B cell (primary cell): ENCODE measurements at regions of chr7 and their contacts with region 1.

Region 1: GRCh38 chr7:75914730-75915585 is at the start of gene POR:
- DNase-seq: peak; percentile 99
- ATAC-seq: peak; percentile 96
- H3K4me3 ChIP-seq: peak within 1 kb of the TSS; percentile 72 to 99 (median 91)
- H3K4me3 Mint-ChIP-seq: peak within 1 kb of the TSS; percentile 94
- H3K27ac ChIP-seq: peak within 1 kb of the TSS; percentile 89 to 95
- H3K27ac Mint-ChIP-seq: peak within 1 kb of the TSS; percentile 97
- H3K4me1 ChIP-seq: peaks cover 18 to 24% of the 10 kb centered on the region in 2 donors
- H3K4me1 Mint-ChIP-seq: peaks cover 31% of the 10 kb centered on the region
- H3K27me3 ChIP-seq: no peaks in the 10 kb centered on the region
- H3K27me3 Mint-ChIP-seq: no peaks in the 10 kb centered on the region
- CTCF ChIP-seq: no peak
- total RNA-seq, gene POR: 76.6 and 78.4 TPM in 2 replicates

Region 2: GRCh38 chr7:75878769-75879611 is 36.0 kb before region 1 on chr7 and contains the start of gene RHBDD2:
- CTCF ChIA-PET with region 1: no interaction called
- POLR2A ChIA-PET with region 1: interaction called, 10 read pairs
- intact Hi-C with region 1: loop called (anchors 1 kb)
- DNase-seq: peak; percentile 95
- ATAC-seq: peak; percentile 98
- H3K4me3 ChIP-seq: peak within 1 kb of the TSS; percentile 59 to 97 (median 81)
- H3K4me3 Mint-ChIP-seq: peak within 1 kb of the TSS; percentile 90
- H3K27ac ChIP-seq: peak within 1 kb of the TSS; percentile 66 to 87
- H3K27ac Mint-ChIP-seq: peak within 1 kb of the TSS; percentile 98
- H3K4me1 ChIP-seq: peaks cover 18 to 20% of the 10 kb centered on the region in 2 donors
- H3K4me1 Mint-ChIP-seq: peaks cover 26% of the 10 kb centered on the region
- H3K27me3 ChIP-seq: no peaks in the 10 kb centered on the region
- H3K27me3 Mint-ChIP-seq: no peaks in the 10 kb centered on the region
- CTCF ChIP-seq: peak; percentile 11
- total RNA-seq, gene RHBDD2: 31.6 and 34.1 TPM in 2 replicates

Region 3: DNA sequence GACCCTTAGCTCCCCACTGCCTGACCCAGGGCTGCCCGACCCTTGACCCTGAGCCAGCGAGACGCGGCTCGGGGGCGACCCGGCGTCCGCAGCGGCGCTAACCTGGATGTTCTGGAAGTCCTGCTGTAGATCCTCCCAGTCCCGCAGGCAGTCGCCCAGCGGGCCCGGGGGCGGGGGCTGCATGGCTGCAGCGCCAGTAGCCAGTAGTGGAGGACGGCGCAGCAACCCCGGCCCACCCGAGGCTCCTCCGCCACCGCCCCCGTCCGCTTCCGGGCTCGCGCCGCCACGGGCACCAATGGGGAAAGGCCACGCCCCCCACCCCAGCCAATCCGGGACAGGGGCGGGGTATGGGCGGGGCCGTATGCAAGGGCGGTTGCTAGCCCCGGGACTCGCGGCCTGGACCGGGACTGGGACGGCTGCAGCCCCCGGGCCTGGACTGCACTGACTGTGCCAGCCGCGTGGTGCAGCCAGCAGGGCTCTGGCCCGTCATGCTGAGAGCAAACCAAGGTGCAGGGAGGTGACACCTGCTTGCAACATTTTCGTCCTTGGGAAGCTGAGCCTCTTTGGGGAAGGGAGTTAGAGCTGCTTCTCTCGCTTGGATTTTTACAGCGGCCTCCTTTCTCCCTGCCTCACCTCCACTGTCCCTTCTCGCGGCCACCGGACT is 79.6 kb after region 1 on chr7 and contains the start of gene TMEM120A:
- CTCF ChIA-PET with region 1: no interaction called
- POLR2A ChIA-PET with region 1: interaction called, 5 read pairs
- intact Hi-C with region 1: loop called (anchors 2 kb)
- DNase-seq: peak; percentile 93
- ATAC-seq: peak; percentile 99
- H3K4me3 ChIP-seq: peak within 1 kb of the TSS; percentile 17 to 94 (median 90)
- H3K4me3 Mint-ChIP-seq: peak within 1 kb of the TSS; percentile 80
- H3K27ac ChIP-seq: peak within 1 kb of the TSS in 1 of 2 donors; percentile 70
- H3K27ac Mint-ChIP-seq: peak within 1 kb of the TSS; percentile 67
- H3K4me1 ChIP-seq: peaks cover 8 to 22% of the 10 kb centered on the region in 2 donors
- H3K4me1 Mint-ChIP-seq: peaks cover 36% of the 10 kb centered on the region
- H3K27me3 ChIP-seq: no peaks in the 10 kb centered on the region
- H3K27me3 Mint-ChIP-seq: no peaks in the 10 kb centered on the region
- CTCF ChIP-seq: no peak
- total RNA-seq, gene TMEM120A: 49.3 and 52.6 TPM in 2 replicates

Region 4: GRCh38 chr7:76047811-76048667 is 133.1 kb after region 1 on chr7 and contains the starts of genes MDH2 and STYXL1:
- CTCF ChIA-PET with region 1: no interaction called
- POLR2A ChIA-PET with region 1: interaction called, 5 read pairs
- intact Hi-C with region 1: loop called (anchors 2 kb)
- DNase-seq: peak; percentile 90
- ATAC-seq: peak; percentile 93
- H3K4me3 ChIP-seq: peak within 1 kb of the TSS; percentile 91 to 99 (median 99)
- H3K4me3 Mint-ChIP-seq: peak within 1 kb of the TSS; percentile 94
- H3K27ac ChIP-seq: peak within 1 kb of the TSS; percentile 77 to 91
- H3K27ac Mint-ChIP-seq: peak within 1 kb of the TSS; percentile 93
- H3K4me1 ChIP-seq: peaks cover 14 to 16% of the 10 kb centered on the region in 2 donors
- H3K4me1 Mint-ChIP-seq: peaks cover 44% of the 10 kb centered on the region
- H3K27me3 ChIP-seq: no peaks in the 10 kb centered on the region
- H3K27me3 Mint-ChIP-seq: no peaks in the 10 kb centered on the region
- CTCF ChIP-seq: no peak
- total RNA-seq, gene MDH2: 77.1 and 77.2 TPM in 2 replicates
- total RNA-seq, gene STYXL1: 15.2 and 17.8 TPM in 2 replicates

Region 5: DNA sequence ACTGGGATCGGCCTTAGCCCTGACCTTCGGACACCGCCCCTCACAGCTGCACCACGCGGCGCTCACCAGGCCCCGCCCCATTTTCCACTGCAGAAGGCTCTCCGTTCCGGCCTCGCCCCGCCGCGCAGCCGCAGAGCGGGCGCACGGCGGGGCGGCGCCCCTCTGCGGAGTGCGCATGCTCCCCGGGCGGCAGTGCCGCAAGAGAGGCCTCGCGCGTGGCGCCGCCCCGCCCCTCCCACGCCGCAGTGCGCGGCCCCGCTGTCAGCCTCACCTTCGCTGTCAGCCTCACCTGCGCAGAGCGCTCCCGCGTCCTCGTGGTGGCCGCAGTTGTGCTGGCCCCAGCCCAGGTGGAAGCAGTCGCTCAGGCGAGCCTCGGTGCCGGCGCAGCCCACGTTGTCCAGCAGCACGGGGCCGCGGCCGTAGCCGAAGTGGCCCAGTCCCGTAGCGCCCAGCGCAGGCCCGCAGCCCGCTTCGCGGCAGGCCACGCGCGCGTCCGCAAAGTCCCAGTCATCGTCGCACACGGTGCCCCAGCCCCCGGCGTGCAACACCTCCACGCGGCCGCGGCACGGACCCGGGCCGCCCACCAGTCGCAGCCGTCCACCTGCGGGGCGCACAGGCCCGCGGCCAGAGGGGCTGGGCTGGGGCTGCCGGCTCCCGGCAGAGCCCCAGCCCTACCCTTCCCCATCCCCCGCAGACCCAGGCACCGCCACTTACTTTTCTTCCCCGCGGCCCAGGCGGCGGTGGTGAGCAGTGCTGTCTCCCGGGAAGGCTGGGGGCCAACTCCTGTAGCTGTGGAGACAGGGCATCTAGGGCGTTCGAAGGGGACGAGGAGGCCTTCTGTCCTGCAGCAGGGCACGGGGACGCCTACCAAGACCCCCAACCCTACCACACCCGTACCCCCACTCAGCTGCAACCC is 478.4 kb after region 1 on chr7:
- CTCF ChIA-PET with region 1: no interaction called
- POLR2A ChIA-PET with region 1: no interaction called
- intact Hi-C with region 1: loop called (anchors 10 kb)
- DNase-seq: peak; percentile 94
- ATAC-seq: peak; percentile 86
- H3K4me3 ChIP-seq: peak overlapping the region; percentile 5 to 80 (median 65)
- H3K4me3 Mint-ChIP-seq: peak overlapping the region; percentile 91
- H3K27ac ChIP-seq: peak overlapping the region; percentile 37 to 53
- H3K27ac Mint-ChIP-seq: peak overlapping the region; percentile 98
- H3K4me1 ChIP-seq: peaks cover 18 to 32% of the 10 kb centered on the region in 2 donors
- H3K4me1 Mint-ChIP-seq: peaks cover 24% of the 10 kb centered on the region
- H3K27me3 ChIP-seq: no peaks in the 10 kb centered on the region
- H3K27me3 Mint-ChIP-seq: no peaks in the 10 kb centered on the region
- CTCF ChIP-seq: no peak